ENCODE measurements at regions of chr5 and their contacts with region 1.

Region 1: DNA sequence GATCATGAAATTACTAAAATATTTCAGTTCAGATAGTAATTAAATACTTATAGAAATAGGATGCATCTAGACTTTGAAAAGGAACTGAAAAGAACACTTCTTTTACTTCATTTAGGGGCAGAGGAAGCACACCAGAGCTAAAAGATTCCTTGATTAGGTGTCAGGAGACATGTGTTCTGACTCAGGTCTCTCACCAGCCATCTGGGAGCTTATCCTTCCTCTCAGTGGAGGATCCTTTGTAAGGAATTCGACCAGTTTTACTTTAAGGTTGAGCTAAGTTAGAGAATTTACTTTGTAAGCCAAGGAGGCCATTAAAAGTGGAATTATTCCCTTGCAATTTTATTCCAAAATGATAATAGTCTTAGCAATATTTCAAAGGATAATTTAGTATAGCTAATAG is 16.7 kb downstream of the VCAN start:
- DNase-seq: no peak
- ATAC-seq: no peak
- H3K4me3 ChIP-seq: no peak overlapping the region
- H3K27ac ChIP-seq: no peak overlapping the region
- H3K4me1 ChIP-seq: no peaks in the 10 kb centered on the region
- H3K27me3 ChIP-seq: no peaks in the 10 kb centered on the region
- CTCF ChIP-seq: no peak
- POLR2A ChIP-seq: no peak

Region 2: GRCh38 chr5:82459626-82460025 is 1028.6 kb before region 1 on chr5:
- intact Hi-C with region 1: loop called in 1 of 10 experiments (anchors 5 kb)
- DNase-seq: no peak
- ATAC-seq: no peak
- H3K4me3 ChIP-seq: no peak overlapping the region
- H3K27ac ChIP-seq: no peak overlapping the region
- H3K4me1 ChIP-seq: no peaks in the 10 kb centered on the region
- H3K27me3 ChIP-seq: no peaks in the 10 kb centered on the region
- CTCF ChIP-seq: no peak
- POLR2A ChIP-seq: no peak

Region 3: DNA sequence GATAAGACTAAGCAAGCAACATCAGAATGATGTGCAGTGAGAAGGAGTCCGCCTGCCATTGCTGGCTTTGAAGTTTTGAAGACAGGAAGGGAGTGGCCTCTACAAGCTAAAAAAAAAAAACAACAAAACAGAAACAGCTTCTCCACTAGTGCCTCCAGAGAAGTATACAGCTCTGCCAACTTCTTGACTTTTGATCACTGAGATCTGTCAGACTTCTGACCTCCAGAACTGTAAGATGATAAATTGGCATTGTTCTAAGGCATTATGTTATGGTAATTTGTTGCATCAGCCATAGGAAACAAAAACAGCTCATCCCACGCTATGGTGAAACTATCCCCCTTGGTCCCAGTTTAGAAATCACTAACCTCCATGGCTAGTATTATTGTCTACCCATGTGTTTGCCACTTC is 147.8 kb before region 1 on chr5:
- intact Hi-C with region 1: no loop called
- DNase-seq: no peak
- ATAC-seq: no peak
- H3K4me3 ChIP-seq: no peak overlapping the region
- H3K27ac ChIP-seq: peak overlapping the region in 1 of 12 donors; percentile 43
- H3K4me1 ChIP-seq: peaks cover 0 to 8% (median 0%) of the 10 kb centered on the region in 12 donors
- H3K27me3 ChIP-seq: no peaks in the 10 kb centered on the region
- CTCF ChIP-seq: no peak
- POLR2A ChIP-seq: no peak

Measured in heart left ventricle (tissue), 16 donors.